Right ventricle myocardium inferior (tissue), 1 donor: ENCODE measurements at regions of chrX and their contacts with region 1.

Region 1: DNA sequence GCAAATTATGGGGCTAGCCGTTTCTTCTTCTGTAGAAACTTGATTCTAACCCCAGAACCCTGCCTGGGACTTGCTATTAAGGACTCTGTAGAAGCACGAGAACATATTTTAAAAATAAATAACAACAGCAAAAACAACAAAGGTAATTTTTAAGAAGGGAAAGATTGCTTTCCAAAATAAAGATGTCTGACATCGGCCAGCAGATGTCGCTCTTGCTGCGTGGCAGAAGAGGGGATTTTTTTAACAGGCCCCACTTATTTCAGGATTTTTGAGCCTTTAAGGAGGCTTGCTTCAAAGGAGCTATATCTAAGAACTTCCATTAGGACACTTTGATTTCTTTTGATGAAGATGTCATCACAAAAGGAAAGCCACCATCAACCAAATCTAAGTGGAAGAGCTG is 62.8 kb upstream of the EGFL6 start:
- DNase-seq: no peak
- ATAC-seq: no peak

Region 2: DNA sequence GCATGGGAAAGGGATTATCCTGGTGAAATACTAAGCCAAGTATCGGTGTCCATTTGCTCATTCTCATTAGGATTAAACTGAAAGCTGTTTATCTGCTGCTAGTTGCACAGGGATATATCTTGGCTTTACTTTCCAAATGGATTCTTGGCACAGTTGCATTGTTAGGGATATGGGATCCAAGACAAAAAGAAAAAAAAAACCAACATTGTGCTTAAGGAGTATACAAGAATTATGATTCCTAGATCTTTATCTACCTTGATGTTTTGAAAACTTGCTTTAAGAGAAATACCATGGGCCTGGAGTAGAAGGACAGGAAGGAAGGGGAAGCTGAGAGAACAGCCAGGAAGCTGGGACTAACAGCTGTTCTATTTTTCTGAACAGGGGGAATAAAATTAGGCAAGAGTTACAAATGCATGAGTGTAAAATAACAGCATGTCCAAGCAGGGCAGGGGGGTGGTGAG is 294.4 kb before region 1 on chrX:
- intact Hi-C with region 1: no loop called
- DNase-seq: no peak
- ATAC-seq: peak; percentile 72

Region 3: DNA sequence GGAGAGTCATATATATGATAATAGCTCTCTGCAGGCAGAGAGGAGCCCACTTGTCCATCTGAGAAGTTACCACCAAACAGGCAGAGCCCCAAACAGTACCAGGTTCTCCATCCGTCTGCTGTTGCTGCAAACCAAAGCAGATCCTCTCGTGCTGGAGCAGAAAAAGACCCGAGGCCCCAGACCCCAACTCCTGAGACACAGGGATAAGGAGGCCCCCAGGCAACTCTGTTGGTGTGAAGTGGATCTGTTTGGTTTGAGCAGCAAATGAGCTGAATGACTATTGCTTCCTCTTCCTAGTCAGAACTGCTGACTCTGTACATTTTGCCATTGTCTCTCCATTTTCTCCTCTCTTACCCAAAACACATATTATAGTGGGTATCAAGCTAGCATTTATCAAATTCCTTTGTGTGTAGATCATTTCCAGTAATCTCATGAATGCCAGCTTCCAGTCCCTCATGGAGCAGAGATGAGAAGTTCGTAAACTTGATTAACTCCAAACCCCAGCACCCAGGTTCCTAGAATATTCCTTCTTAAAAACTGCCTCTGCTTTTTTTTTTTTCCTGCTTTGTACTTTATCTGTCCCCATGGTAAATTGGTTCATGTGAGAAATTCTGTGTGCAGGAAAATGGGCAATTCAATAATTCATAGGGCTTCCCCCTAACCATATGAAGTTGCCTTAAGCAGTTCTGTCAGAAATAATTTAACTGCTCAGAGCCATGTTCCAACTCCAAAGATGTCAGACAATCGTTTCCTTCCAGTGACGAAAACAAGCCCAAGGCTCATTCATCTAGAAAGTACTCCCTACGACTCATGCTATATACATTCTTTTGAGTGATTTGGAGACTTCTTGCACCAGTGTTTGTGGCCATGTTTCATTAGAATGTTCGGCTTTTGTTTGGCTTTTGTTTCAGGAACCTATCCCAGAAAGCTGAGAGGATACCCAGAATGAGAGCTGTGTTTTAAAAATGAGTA is 88.2 kb before region 1 on chrX:
- intact Hi-C with region 1: no loop called
- DNase-seq: no peak
- ATAC-seq: no peak

Region 4: DNA sequence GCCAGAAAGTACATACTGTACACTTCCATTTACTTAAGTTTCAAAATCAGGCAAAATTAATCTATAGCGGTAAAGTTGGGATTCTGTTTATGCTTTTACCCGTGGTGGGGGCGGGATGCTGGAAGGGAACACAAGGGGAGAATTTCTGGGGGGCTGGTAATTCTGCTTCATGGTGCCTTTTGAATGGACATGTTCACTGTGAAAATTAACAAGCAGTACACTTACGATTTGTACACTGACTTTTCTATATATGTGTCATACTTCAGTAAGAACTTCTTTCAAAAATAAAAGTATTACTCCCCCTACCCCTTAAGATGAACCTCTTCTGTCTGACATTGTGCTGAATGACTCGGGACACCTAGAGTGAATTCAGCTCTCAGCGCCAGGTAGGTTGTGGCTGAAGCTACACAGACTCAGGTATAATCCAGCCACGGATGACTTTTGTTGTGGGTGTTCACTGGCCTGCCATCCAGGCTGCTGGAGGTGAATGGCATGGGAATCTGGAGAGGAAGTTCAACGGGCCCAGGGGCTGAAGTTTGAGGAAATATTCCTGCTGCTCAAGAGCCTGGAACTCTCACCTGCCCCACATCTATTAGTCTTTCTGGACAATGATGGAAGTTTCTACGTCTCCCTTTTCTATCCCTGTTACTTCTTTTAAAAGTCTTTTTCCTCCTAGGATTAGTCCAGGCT is 139.0 kb after region 1 on chrX:
- intact Hi-C with region 1: loop called (anchors 1 kb)
- DNase-seq: no peak
- ATAC-seq: no peak

Region 5: GRCh38 chrX:13923845-13924244 is 417.3 kb after region 1 on chrX:
- intact Hi-C with region 1: no loop called
- DNase-seq: no peak
- ATAC-seq: no peak